GM13976 (cell line): ENCODE measurements at regions of chr13 and their contacts with region 1.

Region 1: GRCh38 chr13:110412132-110412914 is 105.2 kb downstream of the COL4A2 start:
- DNase-seq: peak; percentile 85
- CTCF ChIP-seq: peak; percentile 90

Region 2: DNA sequence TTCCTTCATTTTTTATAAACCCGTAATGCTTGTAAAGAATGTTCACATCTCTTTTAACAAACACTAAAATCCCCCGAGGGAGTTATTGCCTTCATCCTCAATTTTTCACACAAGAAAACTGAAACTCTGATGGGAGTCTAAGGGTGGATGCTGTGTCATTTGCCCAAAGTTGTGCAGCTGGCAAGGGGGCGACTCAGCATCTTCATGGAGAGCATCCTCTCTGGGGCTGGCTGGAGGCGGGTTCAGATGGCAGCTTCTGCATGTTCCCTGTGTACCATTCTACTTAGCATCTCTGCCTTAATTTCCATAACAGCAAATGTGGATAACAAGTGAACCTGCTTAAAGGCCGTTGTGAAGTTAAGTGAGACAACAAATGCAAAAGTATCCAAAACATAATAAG is 882.4 kb before region 1 on chr13:
- in situ Hi-C with region 1: no loop called
- DNase-seq: no peak
- CTCF ChIP-seq: no peak

Region 3: GRCh38 chr13:110225609-110226562 is 186.4 kb before region 1 on chr13:
- in situ Hi-C with region 1: loop called (anchors 10 kb)
- DNase-seq: no peak
- CTCF ChIP-seq: no peak